Activated CD4-positive, alpha-beta memory T cell treated with anti-CD3 and anti-CD28 coated beads for 36 hours (primary cell): ENCODE measurements at regions of chr10 and their contacts with region 1.

Region 1: GRCh38 chr10:104406715-104407650 is 53.4 kb downstream of the CFAP58 start:
- DNase-seq: no peak
- H3K4me3 Mint-ChIP-seq: no peak overlapping the region
- H3K27ac Mint-ChIP-seq: no peak overlapping the region
- H3K4me1 Mint-ChIP-seq: no peaks in the 10 kb centered on the region
- H3K27me3 Mint-ChIP-seq: peaks cover 3% of the 10 kb centered on the region

Region 2: GRCh38 chr10:104337974-104338735 is 68.8 kb before region 1 on chr10 and contains the start of gene ITPRIP:
- CTCF ChIA-PET with region 1: no interaction called
- POLR2A ChIA-PET with region 1: no interaction called
- intact Hi-C with region 1: no loop called
- DNase-seq: peak; percentile 81
- H3K4me3 Mint-ChIP-seq: peak within 1 kb of the TSS; percentile 82
- H3K27ac Mint-ChIP-seq: peak within 1 kb of the TSS; percentile 90
- H3K4me1 Mint-ChIP-seq: peaks cover 48% of the 10 kb centered on the region
- H3K27me3 Mint-ChIP-seq: no peaks in the 10 kb centered on the region
- total RNA-seq, gene ITPRIP: 15.6 to 16.6 TPM

Region 3: GRCh38 chr10:104622598-104623209 is 215.7 kb after region 1 on chr10:
- CTCF ChIA-PET with region 1: no interaction called
- POLR2A ChIA-PET with region 1: interaction called, 3 read pairs
- intact Hi-C with region 1: loop called (anchors 5 kb)
- DNase-seq: peak; percentile 26
- H3K4me3 Mint-ChIP-seq: no peak overlapping the region
- H3K27ac Mint-ChIP-seq: no peak overlapping the region
- H3K4me1 Mint-ChIP-seq: no peaks in the 10 kb centered on the region
- H3K27me3 Mint-ChIP-seq: peaks cover 24% of the 10 kb centered on the region